Activated CD4-positive, alpha-beta T cell treated with anti-CD3 and anti-CD28 coated beads, Interleukin-2, amount 10 ng/mL, durations not matched to agents 24 days and 14 days (primary cell): ENCODE measurements at regions of chr3 and their contacts with region 1.

Region 1: DNA sequence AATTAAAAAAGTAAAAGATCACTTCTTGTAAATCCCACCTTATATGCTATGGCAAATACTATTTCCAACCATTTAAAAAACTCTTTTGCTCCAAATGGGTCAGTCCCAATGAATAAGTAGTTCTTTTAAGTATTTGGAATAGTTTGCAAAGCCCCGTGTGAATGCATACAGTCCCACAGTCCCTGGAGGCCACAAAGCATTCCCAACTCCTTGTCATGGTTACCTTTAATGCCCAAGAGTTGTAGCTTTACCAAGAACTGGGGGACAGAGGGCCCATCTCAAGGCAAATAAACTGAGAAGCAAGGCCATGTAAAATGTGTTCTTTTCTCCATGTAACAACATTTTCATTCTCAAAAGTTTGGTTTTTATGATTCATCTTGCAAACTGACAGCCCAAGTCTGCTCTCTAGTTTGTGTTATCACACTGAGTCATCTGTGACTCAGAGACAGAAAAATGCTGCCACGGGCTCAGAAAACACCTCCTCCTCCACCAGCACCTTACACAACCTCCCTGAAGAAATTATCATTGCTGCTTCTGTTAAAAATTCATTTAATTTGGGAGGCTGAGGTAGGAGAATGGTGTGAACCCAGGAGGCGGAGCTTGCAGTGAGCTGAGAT is 336.2 kb downstream of the ERC2 start:
- DNase-seq: no peak
- H3K4me3 Mint-ChIP-seq: no peak overlapping the region
- H3K27ac Mint-ChIP-seq: peak overlapping the region; percentile 52
- H3K4me1 Mint-ChIP-seq: peaks cover 4% of the 10 kb centered on the region
- H3K27me3 Mint-ChIP-seq: peaks cover 7% of the 10 kb centered on the region

Region 2: GRCh38 chr3:56164436-56164835 is 32.4 kb after region 1 on chr3:
- intact Hi-C with region 1: no loop called
- DNase-seq: no peak
- H3K4me3 Mint-ChIP-seq: no peak overlapping the region
- H3K27ac Mint-ChIP-seq: no peak overlapping the region
- H3K4me1 Mint-ChIP-seq: no peaks in the 10 kb centered on the region
- H3K27me3 Mint-ChIP-seq: no peaks in the 10 kb centered on the region

Region 3: DNA sequence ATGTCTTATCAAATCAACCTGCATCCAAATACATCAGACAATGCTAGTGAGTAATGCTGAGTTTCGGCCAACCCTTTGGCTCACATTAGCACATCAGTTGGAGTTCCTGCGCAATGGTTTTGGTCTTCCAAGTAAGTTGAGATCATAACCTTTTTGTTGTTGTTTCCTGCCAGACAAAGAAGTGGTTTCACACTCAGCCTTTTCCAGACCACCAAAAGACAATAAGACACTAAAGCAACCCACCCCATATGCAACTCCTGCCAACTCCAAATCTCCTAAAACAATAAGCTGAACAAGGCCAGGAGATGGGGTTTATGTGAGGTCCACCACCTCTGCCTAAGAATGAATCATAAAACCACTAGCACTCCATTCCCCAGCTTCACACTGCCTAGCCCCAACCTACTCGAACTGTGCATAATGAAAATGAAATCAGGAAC is 159.2 kb after region 1 on chr3:
- intact Hi-C with region 1: loop called (anchors 5 kb)
- DNase-seq: peak; percentile 70
- H3K4me3 Mint-ChIP-seq: peak overlapping the region; percentile 18
- H3K27ac Mint-ChIP-seq: peak overlapping the region; percentile 80
- H3K4me1 Mint-ChIP-seq: peaks cover 22% of the 10 kb centered on the region
- H3K27me3 Mint-ChIP-seq: no peaks in the 10 kb centered on the region

Region 4: GRCh38 chr3:56693750-56694149 is 561.7 kb after region 1 on chr3:
- intact Hi-C with region 1: no loop called
- DNase-seq: peak; percentile 62
- H3K4me3 Mint-ChIP-seq: peak overlapping the region; percentile 65
- H3K27ac Mint-ChIP-seq: peak overlapping the region; percentile 34
- H3K4me1 Mint-ChIP-seq: peaks cover 35% of the 10 kb centered on the region
- H3K27me3 Mint-ChIP-seq: no peaks in the 10 kb centered on the region